GM13976 (cell line): ENCODE measurements at regions of chr3 and their contacts with region 1.

Region 1: DNA sequence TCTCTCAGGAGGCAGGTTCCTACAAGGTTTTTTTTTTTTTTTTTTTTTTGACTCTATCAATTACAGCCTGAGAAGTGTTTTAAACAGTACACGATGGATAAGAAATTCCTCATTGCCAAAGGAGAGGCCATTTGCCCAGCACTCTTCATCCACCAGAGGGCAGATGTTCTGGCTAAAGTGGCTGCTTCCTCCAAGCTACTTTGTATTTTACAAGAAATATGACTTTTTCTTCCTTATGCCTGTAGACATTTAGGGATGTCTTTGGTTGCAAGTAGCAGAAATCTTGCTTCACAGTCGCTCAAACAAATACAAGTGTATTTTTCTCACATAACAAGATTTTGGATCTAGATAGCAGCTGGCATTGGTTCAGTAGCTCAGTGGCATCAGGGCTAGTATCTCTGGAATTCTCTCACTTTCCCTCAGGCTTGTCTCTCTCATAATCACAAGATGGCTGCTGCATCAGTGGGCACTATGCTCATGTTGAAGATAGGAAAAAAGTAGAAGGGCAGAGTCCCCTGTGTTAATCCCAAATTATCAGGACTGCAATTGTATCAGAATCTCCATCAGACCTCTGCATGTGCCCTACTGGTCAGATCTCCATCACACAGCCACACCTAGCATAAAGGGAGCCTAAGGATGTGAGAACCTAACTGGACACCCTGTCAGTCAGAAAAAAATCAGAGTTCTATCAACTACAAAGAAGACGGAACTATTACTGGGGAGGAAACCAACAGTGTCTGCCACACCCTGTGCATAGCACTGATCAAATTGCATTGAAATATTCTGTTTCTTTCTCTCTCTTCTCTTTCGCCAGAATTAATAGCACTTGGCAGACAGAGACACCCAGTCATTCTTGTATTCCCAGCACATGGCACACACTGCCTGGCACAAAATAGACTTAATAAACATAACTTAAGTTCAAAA is 138.9 kb upstream of the COL8A1 start:
- DNase-seq: peak; percentile 28
- CTCF ChIP-seq: peak; percentile 67

Region 2: DNA sequence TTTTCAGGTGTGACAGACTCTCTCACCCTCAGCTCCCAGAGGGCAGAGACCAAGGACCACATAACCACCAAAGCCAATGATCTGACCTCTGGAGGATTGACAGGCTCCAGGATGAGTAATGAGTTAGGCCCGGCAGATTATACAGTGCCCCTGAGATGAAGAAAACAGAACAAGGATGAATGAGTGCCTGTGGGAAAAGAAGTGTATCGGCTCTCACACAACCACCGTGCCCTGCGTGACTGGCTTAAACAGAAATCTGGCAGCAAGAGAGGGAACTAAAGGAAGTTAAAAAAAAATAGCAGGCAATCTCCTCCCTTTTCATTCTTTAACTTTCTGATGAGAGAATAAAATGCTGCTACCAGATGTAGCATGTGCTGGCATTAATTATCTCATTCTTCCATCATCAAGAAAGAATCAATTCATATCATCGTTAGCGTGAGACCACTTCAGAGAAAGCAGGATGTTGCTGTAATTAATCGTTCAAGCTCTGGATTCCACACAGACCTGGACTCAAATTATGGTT is 88.6 kb before region 1 on chr3:
- in situ Hi-C with region 1: loop called (anchors 10 kb)
- DNase-seq: no peak
- CTCF ChIP-seq: no peak